ENCODE measurements at regions of chr15 and their contacts with region 1.

Region 1: GRCh38 chr15:55290528-55291057 is 980 bp upstream of the RAB27A start:
- DNase-seq: peak; percentile 75 to 92 (median 86)
- ATAC-seq: peak; percentile 69
- H3K4me3 ChIP-seq: peak overlapping the region; percentile 74 to 94
- H3K4me3 Mint-ChIP-seq: peak overlapping the region; percentile 93
- H3K27ac ChIP-seq: peak overlapping the region; percentile 81 to 94
- H3K27ac Mint-ChIP-seq: peak overlapping the region; percentile 94
- H3K4me1 ChIP-seq: peaks cover 13% of the 10 kb centered on the region
- H3K4me1 Mint-ChIP-seq: peaks cover 33% of the 10 kb centered on the region
- H3K27me3 ChIP-seq: no peaks in the 10 kb centered on the region
- H3K27me3 Mint-ChIP-seq: no peaks in the 10 kb centered on the region
- CTCF ChIP-seq: peak; percentile 97

Region 2: DNA sequence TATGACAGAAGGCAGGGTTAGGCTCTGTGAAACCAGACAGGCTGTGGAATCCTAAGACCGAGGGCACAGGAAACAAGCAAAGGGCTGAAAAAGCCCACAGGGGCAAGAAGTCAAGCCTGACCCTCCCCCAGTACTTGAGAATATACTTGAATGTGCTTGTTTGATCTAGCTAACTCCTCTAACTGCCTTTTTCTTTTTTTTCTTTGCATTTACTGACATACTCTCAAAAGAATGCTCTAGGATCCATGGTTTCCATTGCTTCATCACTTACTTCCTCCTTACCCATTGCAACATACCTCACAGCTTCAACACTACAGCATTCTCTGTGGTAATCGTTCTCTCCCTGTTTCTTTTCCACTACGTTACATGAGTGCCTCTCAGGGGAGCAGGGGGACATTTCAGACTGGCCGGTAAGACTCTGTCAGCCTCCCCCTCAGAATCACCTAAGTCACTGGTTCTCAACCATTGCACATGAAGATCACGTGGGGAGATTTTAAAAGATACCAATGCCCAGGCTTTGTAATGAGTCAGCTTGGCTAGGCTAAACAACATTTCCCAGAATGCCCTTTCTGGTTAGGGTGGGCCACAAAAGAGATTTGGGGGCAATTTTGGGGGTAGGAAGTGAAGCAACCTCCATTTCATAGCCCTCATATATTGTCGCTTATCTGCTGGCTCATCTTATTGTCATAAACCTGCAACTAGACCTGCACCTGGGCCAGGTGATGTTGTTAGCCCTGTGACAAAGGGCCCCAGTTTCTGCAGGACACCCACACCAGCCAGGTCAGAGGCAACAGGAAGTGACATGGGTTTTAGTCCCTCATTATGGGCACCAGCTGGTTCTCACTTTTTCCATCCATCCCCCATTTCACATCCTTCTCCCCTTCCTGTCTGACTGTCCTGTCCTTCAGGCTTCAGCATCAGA is 69.2 kb before region 1 on chr15:
- CTCF ChIA-PET with region 1: interaction called, 61 read pairs
- POLR2A ChIA-PET with region 1: interaction called, 5 read pairs
- intact Hi-C with region 1: loop called (anchors 1 kb)
- DNase-seq: peak in 4 of 9 experiments; percentile 25 to 64 (median 36)
- ATAC-seq: peak; percentile 27
- H3K4me3 ChIP-seq: no peak overlapping the region
- H3K4me3 Mint-ChIP-seq: peak overlapping the region; percentile 0
- H3K27ac ChIP-seq: peak overlapping the region in 1 of 2 experiments; percentile 66
- H3K27ac Mint-ChIP-seq: peak overlapping the region; percentile 85
- H3K4me1 ChIP-seq: peaks cover 52% of the 10 kb centered on the region
- H3K4me1 Mint-ChIP-seq: peaks cover 59% of the 10 kb centered on the region
- H3K27me3 ChIP-seq: no peaks in the 10 kb centered on the region
- H3K27me3 Mint-ChIP-seq: no peaks in the 10 kb centered on the region
- CTCF ChIP-seq: no peak

Region 3: GRCh38 chr15:55241891-55242290 is 48.7 kb before region 1 on chr15:
- CTCF ChIA-PET with region 1: interaction called, 5 read pairs
- POLR2A ChIA-PET with region 1: no interaction called
- intact Hi-C with region 1: loop called in 1 of 2 experiments (anchors 1 kb)
- DNase-seq: no peak
- ATAC-seq: no peak
- H3K4me3 ChIP-seq: no peak overlapping the region
- H3K4me3 Mint-ChIP-seq: no peak overlapping the region
- H3K27ac ChIP-seq: no peak overlapping the region
- H3K27ac Mint-ChIP-seq: no peak overlapping the region
- H3K4me1 ChIP-seq: peaks cover 18% of the 10 kb centered on the region
- H3K4me1 Mint-ChIP-seq: peaks cover 58% of the 10 kb centered on the region
- H3K27me3 ChIP-seq: no peaks in the 10 kb centered on the region
- H3K27me3 Mint-ChIP-seq: no peaks in the 10 kb centered on the region
- CTCF ChIP-seq: no peak

Region 4: DNA sequence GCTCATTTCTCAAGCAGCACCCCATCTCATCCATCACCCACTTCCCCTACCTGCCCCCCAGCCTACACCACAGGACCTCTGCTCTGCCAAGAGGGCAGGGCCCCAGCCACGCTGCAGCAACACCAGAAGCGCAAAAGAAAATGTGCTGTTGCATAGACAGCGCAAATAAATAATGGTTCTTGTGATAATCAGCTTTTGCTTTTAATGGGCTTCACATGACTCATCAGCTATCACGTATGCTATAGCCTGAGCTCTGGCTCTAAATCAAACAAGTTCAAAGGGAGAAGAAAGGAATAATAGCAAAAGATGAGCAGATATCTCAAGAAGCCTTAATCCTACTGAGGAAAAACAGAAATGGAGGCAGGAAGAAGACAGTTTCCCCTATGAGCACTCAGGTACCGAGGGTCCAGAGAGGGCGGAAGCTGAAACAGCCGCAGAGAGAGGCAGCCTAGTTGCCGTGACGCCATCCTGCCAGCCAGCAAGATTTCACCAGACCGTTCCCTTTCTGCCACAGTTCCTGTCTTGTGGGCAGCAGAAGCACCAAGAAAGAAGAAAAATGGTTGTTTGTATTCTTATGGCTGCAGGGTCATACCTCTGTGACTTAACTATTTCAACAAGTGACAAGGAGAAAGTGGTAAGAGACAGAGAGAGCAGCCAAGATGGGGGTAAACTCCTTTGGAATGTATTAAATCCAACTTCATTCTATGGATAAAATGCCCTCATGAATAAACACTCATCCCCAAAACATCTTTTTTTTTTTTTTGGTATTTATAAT is 23.0 kb before region 1 on chr15:
- CTCF ChIA-PET with region 1: interaction called, 7 read pairs
- POLR2A ChIA-PET with region 1: interaction called, 3 read pairs
- intact Hi-C with region 1: loop called (anchors 1 kb)
- DNase-seq: peak; percentile 54 to 93 (median 82)
- ATAC-seq: peak; percentile 83
- H3K4me3 ChIP-seq: peak overlapping the region; percentile 14 to 27
- H3K4me3 Mint-ChIP-seq: peak overlapping the region; percentile 68
- H3K27ac ChIP-seq: peak overlapping the region; percentile 68 to 89
- H3K27ac Mint-ChIP-seq: peak overlapping the region; percentile 96
- H3K4me1 ChIP-seq: peaks cover 55% of the 10 kb centered on the region
- H3K4me1 Mint-ChIP-seq: peaks cover 77% of the 10 kb centered on the region
- H3K27me3 ChIP-seq: no peaks in the 10 kb centered on the region
- H3K27me3 Mint-ChIP-seq: no peaks in the 10 kb centered on the region
- CTCF ChIP-seq: no peak

Region 5: DNA sequence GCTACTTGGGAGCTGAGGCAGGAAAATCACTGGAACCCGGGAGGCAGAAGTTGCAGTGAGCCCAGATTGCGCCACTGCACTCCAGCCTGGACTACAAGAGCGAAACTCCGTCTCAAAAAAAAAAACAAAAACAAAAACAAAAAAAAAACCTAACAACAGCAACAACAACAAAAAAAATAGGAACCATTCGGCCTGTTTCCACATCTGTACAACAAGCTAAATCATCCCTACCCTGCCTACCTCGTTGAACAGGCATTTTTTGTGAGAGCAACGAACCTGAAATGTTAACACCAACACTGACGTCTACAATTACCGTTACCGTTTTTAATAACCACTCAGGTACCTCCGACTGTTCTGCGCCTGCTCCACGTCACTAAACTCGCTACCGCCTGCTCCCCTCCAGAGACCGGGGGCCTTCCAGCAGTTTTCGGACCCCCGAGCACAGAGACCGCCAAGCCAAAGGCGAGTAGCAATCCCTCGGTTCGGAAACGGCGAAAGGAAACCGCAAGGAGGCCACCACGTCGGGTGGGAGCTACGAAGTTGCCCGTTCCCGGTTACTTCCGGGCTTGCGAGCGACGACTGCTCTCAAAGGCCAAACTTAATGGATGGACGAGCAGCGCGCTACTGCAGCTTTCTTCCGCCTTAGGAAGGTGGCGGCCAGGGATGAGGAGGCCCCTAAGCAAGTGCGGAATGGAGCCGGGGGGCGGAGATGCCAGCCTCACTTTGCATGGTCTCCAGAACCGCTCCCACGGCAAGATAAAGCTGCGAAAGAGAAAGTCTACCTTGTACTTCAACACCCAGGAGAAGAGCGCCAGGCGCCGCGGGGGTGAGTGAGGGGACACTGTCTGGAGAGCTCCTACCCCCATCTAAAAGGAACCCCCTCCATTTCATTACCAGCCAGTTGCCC is 28.2 kb after region 1 on chr15 and contains the starts of genes PIGB and PIGBOS1:
- CTCF ChIA-PET with region 1: interaction called, 4 read pairs
- POLR2A ChIA-PET with region 1: interaction called, 5 read pairs
- intact Hi-C with region 1: loop called (anchors 1 to 2 kb)
- DNase-seq: peak; percentile 59 to 90 (median 79)
- ATAC-seq: peak; percentile 88
- H3K4me3 ChIP-seq: peak within 1 kb of the TSS; percentile 80 to 98
- H3K4me3 Mint-ChIP-seq: peak within 1 kb of the TSS; percentile 98
- H3K27ac ChIP-seq: peak within 1 kb of the TSS; percentile 95 to 99
- H3K27ac Mint-ChIP-seq: peak within 1 kb of the TSS; percentile 100
- H3K4me1 ChIP-seq: peaks cover 39% of the 10 kb centered on the region
- H3K4me1 Mint-ChIP-seq: peaks cover 81% of the 10 kb centered on the region
- H3K27me3 ChIP-seq: no peaks in the 10 kb centered on the region
- H3K27me3 Mint-ChIP-seq: no peaks in the 10 kb centered on the region
- CTCF ChIP-seq: no peak
- total RNA-seq, gene PIGB: 17.8 to 19.2 TPM
- total RNA-seq, gene PIGBOS1: 6.4 to 6.8 TPM

Region 6: GRCh38 chr15:55357774-55358173 is 67.2 kb after region 1 on chr15:
- CTCF ChIA-PET with region 1: no interaction called
- POLR2A ChIA-PET with region 1: no interaction called
- intact Hi-C with region 1: no loop called
- DNase-seq: no peak
- ATAC-seq: no peak
- H3K4me3 ChIP-seq: no peak overlapping the region
- H3K4me3 Mint-ChIP-seq: no peak overlapping the region
- H3K27ac ChIP-seq: no peak overlapping the region
- H3K27ac Mint-ChIP-seq: no peak overlapping the region
- H3K4me1 ChIP-seq: no peaks in the 10 kb centered on the region
- H3K4me1 Mint-ChIP-seq: no peaks in the 10 kb centered on the region
- H3K27me3 ChIP-seq: no peaks in the 10 kb centered on the region
- H3K27me3 Mint-ChIP-seq: no peaks in the 10 kb centered on the region
- CTCF ChIP-seq: no peak

Region 7: GRCh38 chr15:55420171-55420866 is 129.7 kb after region 1 on chr15:
- CTCF ChIA-PET with region 1: no interaction called
- POLR2A ChIA-PET with region 1: no interaction called
- intact Hi-C with region 1: no loop called
- DNase-seq: no peak
- ATAC-seq: no peak
- H3K4me3 ChIP-seq: no peak overlapping the region
- H3K4me3 Mint-ChIP-seq: no peak overlapping the region
- H3K27ac ChIP-seq: no peak overlapping the region
- H3K27ac Mint-ChIP-seq: no peak overlapping the region
- H3K4me1 ChIP-seq: no peaks in the 10 kb centered on the region
- H3K4me1 Mint-ChIP-seq: no peaks in the 10 kb centered on the region
- H3K27me3 ChIP-seq: no peaks in the 10 kb centered on the region
- H3K27me3 Mint-ChIP-seq: no peaks in the 10 kb centered on the region
- CTCF ChIP-seq: no peak

Region 8: GRCh38 chr15:55526559-55527036 is 236.0 kb after region 1 on chr15:
- CTCF ChIA-PET with region 1: no interaction called
- POLR2A ChIA-PET with region 1: no interaction called
- intact Hi-C with region 1: no loop called
- DNase-seq: peak in 2 of 9 experiments; percentile 48 to 62
- ATAC-seq: peak; percentile 42
- H3K4me3 ChIP-seq: no peak overlapping the region
- H3K4me3 Mint-ChIP-seq: no peak overlapping the region
- H3K27ac ChIP-seq: no peak overlapping the region
- H3K27ac Mint-ChIP-seq: no peak overlapping the region
- H3K4me1 ChIP-seq: no peaks in the 10 kb centered on the region
- H3K4me1 Mint-ChIP-seq: no peaks in the 10 kb centered on the region
- H3K27me3 ChIP-seq: peaks cover 0 to 8% of the 10 kb centered on the region in 2 experiments
- H3K27me3 Mint-ChIP-seq: peaks cover 24% of the 10 kb centered on the region
- CTCF ChIP-seq: no peak